ENCODE measurements at regions of chr5 and their contacts with region 1.

Region 1: GRCh38 chr5:119267958-119268386 is 87.8 kb upstream of the TNFAIP8 start:
- DNase-seq: peak; percentile 72
- ATAC-seq: peak; percentile 48
- H3K4me3 Mint-ChIP-seq: peak overlapping the region; percentile 100
- H3K27ac Mint-ChIP-seq: peak overlapping the region; percentile 98
- H3K4me1 Mint-ChIP-seq: peaks cover 35% of the 10 kb centered on the region
- H3K27me3 Mint-ChIP-seq: no peaks in the 10 kb centered on the region

Region 2: DNA sequence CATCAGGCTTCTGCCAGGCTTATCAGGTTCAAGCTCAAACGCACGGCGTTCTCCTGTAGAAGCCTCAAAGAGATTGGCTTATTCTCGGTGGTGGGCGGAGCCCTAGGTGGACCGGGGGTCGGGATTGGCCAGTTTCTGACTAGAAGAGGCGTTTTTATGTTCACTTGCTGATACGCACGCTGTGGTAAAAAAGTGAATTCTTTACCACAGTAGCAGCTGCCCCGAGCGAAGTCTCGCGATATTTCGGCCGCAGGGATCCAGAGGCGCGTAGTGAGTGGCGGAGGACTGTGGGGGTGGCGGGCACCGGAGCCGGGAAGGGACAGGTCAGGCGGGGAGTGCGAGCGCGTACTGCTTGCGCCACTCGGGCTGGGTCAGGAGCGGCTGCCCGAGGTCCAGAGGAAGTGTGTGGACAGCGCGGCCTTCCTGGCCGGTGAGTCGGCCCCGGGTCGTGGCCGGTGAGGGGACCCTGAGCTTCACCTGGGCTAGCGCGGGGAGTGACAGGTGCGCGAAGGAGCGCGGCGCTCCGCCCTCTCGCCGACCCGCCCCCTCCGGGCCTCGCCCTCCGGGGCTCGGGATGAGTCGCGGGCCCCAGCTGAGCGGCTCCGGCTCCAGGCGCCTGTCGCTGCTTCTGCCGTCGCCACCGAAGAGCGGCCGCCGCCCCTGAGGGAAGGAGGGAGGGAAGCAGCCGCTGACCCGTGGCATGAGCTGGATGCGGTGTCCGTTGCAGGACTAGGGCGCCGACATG is 197.0 kb before region 1 on chr5 and contains the start of gene DMXL1:
- POLR2A ChIA-PET with region 1: interaction called, 15 read pairs
- DNase-seq: peak; percentile 95
- ATAC-seq: peak; percentile 86
- H3K4me3 Mint-ChIP-seq: peak within 1 kb of the TSS; percentile 100
- H3K27ac Mint-ChIP-seq: peak within 1 kb of the TSS; percentile 100
- H3K4me1 Mint-ChIP-seq: peaks cover 25% of the 10 kb centered on the region
- H3K27me3 Mint-ChIP-seq: no peaks in the 10 kb centered on the region
- total RNA-seq, gene DMXL1: 35.5 to 40.7 TPM

Region 3: DNA sequence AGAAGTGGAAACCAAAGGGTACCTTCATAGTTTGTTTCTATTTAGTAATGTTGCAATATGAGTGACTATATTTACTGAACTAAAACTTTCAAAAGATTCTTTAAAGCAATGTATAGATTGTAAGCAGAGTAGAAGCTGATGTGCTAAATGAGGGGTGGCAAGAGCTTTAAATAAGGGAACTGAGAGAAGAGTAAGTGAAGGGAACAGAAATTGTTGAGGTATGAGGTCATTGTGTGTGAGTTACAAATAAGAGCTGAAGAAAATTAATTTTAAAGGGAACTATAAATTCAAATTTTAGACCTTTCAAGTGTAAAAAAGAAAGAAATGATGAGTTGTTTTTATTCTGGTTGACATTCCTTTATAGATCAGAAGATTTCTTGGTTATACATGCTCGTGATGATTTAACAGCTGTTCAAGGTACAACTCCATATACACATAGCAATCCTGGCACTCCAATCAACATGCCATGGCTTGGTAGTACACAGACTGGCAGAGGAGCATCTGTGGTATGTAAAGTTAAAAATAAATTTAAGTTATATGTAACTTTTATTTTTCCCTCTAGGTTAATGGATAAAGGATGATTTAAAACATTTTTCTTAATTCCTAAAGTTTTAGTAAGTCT is 47.3 kb before region 1 on chr5:
- POLR2A ChIA-PET with region 1: no interaction called
- DNase-seq: no peak
- ATAC-seq: no peak
- H3K4me3 Mint-ChIP-seq: no peak overlapping the region
- H3K27ac Mint-ChIP-seq: no peak overlapping the region
- H3K4me1 Mint-ChIP-seq: peaks cover 2% of the 10 kb centered on the region
- H3K27me3 Mint-ChIP-seq: no peaks in the 10 kb centered on the region

Region 4: GRCh38 chr5:119238265-119239118 is 29.5 kb before region 1 on chr5:
- POLR2A ChIA-PET with region 1: no interaction called
- DNase-seq: no peak
- ATAC-seq: no peak
- H3K4me3 Mint-ChIP-seq: peak overlapping the region; percentile 6
- H3K27ac Mint-ChIP-seq: no peak overlapping the region
- H3K4me1 Mint-ChIP-seq: peaks cover 12% of the 10 kb centered on the region
- H3K27me3 Mint-ChIP-seq: no peaks in the 10 kb centered on the region

Region 5: DNA sequence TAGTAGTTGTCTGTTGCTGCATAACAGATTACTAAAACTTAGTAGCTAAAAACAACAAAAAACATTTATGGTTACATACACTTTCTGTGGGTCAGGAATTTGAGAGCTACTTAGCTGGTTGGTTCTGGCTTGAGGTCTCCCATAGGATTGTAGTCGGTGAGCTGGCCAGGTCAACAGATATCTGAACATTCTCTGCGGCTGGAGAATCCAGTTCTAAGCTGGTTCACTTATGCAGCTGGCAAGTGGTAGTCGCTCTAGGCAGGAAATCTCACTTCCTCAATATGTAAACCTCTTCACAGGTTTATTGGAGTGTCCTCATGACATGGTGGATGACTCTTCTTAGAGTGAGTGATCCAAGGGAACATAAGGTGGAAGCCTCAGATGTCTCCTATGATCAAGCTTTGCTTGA is 22.2 kb after region 1 on chr5:
- POLR2A ChIA-PET with region 1: interaction called, 13 read pairs
- DNase-seq: no peak
- ATAC-seq: peak; percentile 51
- H3K4me3 Mint-ChIP-seq: peak overlapping the region; percentile 75
- H3K27ac Mint-ChIP-seq: peak overlapping the region; percentile 86
- H3K4me1 Mint-ChIP-seq: peaks cover 74% of the 10 kb centered on the region
- H3K27me3 Mint-ChIP-seq: no peaks in the 10 kb centered on the region

Region 6: DNA sequence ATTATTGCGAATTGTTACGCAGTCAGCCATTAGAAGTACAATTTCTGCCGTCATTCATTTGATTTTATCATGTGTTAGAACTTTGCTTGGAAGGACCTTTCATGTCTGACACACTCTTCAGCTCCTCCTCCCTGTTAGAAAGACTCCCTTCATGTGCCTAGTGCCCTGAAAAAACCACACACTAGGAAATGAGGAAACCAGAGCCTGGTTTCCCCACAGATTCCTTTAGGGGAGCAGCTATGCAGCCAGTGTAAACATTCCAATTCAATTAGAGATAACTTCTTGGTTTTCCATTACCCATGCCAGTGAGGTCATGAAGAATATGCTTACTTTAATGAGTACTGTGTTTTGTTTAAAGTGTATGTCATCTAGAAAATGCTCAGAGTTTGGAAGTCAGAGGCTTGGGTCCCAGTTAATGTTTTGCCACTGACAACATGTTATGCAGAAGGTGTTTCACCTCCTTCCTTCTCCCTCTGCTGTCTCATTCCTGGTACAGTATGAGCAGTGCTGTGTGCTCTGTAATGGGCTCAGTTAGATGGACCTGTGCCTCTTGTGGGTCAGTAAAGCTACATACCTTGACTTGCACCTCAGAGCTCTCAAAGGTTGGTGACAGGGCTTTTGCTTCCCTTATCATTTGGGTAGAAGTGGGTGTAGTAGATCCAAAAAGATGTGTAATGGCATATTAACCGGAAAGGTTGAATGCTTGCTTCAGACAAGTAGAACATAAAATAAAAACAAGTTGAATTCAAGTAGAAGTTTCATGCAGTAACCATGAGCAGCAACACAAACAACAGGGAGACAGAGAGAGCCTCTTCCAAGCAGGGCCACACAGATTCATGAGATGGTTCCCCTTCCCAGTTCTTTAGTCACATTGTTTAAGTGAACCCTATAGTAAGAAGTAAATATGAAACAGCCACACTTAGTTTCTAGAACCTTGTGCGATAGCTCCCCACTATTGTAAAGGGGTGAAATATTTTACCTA is 35.2 kb after region 1 on chr5:
- POLR2A ChIA-PET with region 1: interaction called, 11 read pairs
- DNase-seq: no peak
- ATAC-seq: peak; percentile 28
- H3K4me3 Mint-ChIP-seq: peak overlapping the region; percentile 29
- H3K27ac Mint-ChIP-seq: peak overlapping the region; percentile 64
- H3K4me1 Mint-ChIP-seq: peaks cover 72% of the 10 kb centered on the region
- H3K27me3 Mint-ChIP-seq: no peaks in the 10 kb centered on the region

Region 7: DNA sequence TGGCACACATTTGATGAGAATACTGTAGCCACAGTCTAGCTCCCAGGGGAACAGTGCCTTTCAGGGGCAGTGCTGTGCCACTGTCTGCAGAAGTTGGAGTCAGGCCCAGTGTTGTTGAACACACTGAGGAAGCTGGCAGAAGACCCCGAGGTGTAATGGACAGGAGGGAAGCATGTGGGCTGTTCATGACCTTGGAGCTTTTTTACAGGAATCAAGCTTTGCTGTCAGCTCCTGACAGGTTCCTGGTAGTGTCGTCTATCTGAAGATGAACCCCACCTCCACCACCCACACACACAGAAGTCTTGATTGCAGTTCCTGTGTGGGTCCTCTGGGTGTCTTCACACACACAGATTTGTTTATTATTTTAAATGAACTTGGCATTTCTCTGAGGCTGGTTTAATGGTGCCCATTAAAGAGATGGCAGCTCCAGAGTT is 47.6 kb after region 1 on chr5:
- POLR2A ChIA-PET with region 1: interaction called, 16 read pairs
- DNase-seq: no peak
- ATAC-seq: peak; percentile 78
- H3K4me3 Mint-ChIP-seq: peak overlapping the region; percentile 64
- H3K27ac Mint-ChIP-seq: peak overlapping the region; percentile 88
- H3K4me1 Mint-ChIP-seq: peaks cover 79% of the 10 kb centered on the region
- H3K27me3 Mint-ChIP-seq: no peaks in the 10 kb centered on the region